Naive thymus-derived CD4-positive, alpha-beta T cell (primary cell): ENCODE measurements at regions of chr6 and their contacts with region 1.

Region 1: DNA sequence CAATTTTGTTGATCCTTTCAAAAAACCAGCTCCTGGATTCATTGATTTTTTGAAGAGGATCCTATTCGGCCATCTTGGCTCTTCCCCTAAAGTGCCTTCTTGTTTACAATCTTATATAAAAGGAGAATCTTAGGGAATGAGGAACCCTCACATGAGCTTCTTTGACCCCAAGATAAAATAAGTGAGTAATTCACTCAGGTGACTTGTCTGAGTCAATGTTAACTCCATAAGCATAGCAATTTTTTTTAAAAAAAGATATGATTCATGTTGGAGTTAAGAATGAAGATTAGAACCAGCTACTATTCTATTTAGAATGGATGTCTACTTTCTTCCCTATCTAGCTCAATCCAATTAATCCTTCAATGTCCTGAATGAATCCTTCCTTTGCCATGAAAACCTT is 21.0 kb downstream of the WASF1 start:
- DNase-seq: no peak
- ATAC-seq: no peak
- H3K4me3 ChIP-seq: no peak overlapping the region
- H3K4me3 Mint-ChIP-seq: no peak overlapping the region
- H3K27ac ChIP-seq: no peak overlapping the region
- H3K27ac Mint-ChIP-seq: no peak overlapping the region
- H3K4me1 ChIP-seq: no peaks in the 10 kb centered on the region
- H3K4me1 Mint-ChIP-seq: no peaks in the 10 kb centered on the region
- H3K27me3 ChIP-seq: no peaks in the 10 kb centered on the region
- H3K27me3 Mint-ChIP-seq: peaks cover 7 to 49% (median 33%) of the 10 kb centered on the region in 5 donors

Region 2: GRCh38 chr6:108872141-108872557 is 1286.3 kb before region 1 on chr6:
- CTCF ChIA-PET with region 1: no interaction called
- POLR2A ChIA-PET with region 1: no interaction called
- intact Hi-C with region 1: no loop called
- DNase-seq: no peak
- ATAC-seq: peak; percentile 69
- H3K4me3 ChIP-seq: no peak overlapping the region
- H3K4me3 Mint-ChIP-seq: peak overlapping the region in 2 of 10 donors; percentile 20 to 51
- H3K27ac ChIP-seq: no peak overlapping the region
- H3K27ac Mint-ChIP-seq: peak overlapping the region in 5 of 9 donors; percentile 19 to 85 (median 51)
- H3K4me1 ChIP-seq: peaks cover 9 to 41% of the 10 kb centered on the region in 2 donors
- H3K4me1 Mint-ChIP-seq: peaks cover 25 to 53% (median 31%) of the 10 kb centered on the region in 7 donors
- H3K27me3 ChIP-seq: no peaks in the 10 kb centered on the region
- H3K27me3 Mint-ChIP-seq: peaks cover 0 to 13% (median 0%) of the 10 kb centered on the region in 5 donors

Region 3: GRCh38 chr6:109678240-109678639 is 480.2 kb before region 1 on chr6:
- CTCF ChIA-PET with region 1: no interaction called
- POLR2A ChIA-PET with region 1: no interaction called
- intact Hi-C with region 1: loop called in 1 of 2 experiments (anchors 5 kb)
- DNase-seq: no peak
- ATAC-seq: no peak
- H3K4me3 ChIP-seq: no peak overlapping the region
- H3K4me3 Mint-ChIP-seq: no peak overlapping the region
- H3K27ac ChIP-seq: no peak overlapping the region
- H3K27ac Mint-ChIP-seq: no peak overlapping the region
- H3K4me1 ChIP-seq: no peaks in the 10 kb centered on the region
- H3K4me1 Mint-ChIP-seq: peaks cover 0 to 24% (median 10%) of the 10 kb centered on the region in 7 donors
- H3K27me3 ChIP-seq: no peaks in the 10 kb centered on the region
- H3K27me3 Mint-ChIP-seq: no peaks in the 10 kb centered on the region